CD8-positive, alpha-beta T cell (primary cell): ENCODE measurements at regions of chr15 and their contacts with region 1.

Region 1: DNA sequence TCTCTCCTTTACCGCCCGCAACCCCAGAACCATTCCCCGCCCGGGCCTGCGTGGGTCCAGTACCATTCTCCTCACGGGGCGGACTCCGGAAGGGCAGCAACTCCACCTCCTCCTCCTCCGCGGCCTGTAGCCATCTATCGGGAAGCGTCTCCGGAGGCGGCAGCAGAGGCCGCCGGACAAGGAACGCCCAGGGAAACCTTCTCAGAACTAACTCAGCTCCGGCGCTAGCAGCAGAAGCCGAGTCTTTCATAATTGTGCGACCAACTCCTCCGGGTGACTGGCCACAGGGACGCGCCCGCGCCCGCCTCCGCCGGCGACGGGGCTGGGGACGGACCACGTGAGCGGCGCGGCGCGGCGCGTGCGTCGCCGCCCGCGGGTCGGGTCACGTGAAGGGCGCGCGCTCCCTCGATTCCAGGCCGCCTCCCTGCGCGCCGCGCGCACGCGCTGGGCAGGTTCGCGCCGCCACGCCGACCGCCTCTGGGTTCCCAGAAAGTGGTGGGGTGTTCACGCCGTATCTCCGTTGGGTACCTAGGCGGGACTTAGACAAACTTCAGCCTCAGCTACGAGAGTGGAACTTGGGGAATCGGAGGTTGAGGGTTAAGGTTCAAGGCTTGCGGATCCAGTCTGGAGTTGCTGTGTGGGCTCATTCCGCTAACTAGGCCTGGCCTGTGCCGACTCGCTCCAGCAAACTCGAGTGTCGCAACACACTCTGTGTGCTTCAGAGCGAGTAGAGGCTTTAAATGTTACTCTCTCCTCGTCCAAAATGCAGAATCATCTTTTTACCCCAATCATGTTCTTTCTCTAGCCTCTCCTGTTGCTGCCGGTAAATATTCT is at the start of gene TRPM7:
- DNase-seq: peak; percentile 74 to 96 (median 87)
- ATAC-seq: peak; percentile 74
- H3K4me3 ChIP-seq: peak within 1 kb of the TSS; percentile 78 to 88
- H3K4me3 Mint-ChIP-seq: peak within 1 kb of the TSS; percentile 99
- H3K27ac ChIP-seq: peak within 1 kb of the TSS; percentile 90 to 93
- H3K27ac Mint-ChIP-seq: peak within 1 kb of the TSS; percentile 99
- H3K4me1 ChIP-seq: peaks cover 21% of the 10 kb centered on the region
- H3K4me1 Mint-ChIP-seq: peaks cover 50% of the 10 kb centered on the region
- H3K27me3 ChIP-seq: no peaks in the 10 kb centered on the region
- H3K27me3 Mint-ChIP-seq: no peaks in the 10 kb centered on the region
- CTCF ChIP-seq: no peak
- total RNA-seq, gene TRPM7: 29.5 to 30.3 TPM

Region 2: GRCh38 chr15:48810414-48811317 is 1876.0 kb before region 1 on chr15 and contains the start of gene CEP152:
- CTCF ChIA-PET with region 1: no interaction called
- POLR2A ChIA-PET with region 1: no interaction called
- intact Hi-C with region 1: loop called in 1 of 2 experiments (anchors 10 kb)
- DNase-seq: peak; percentile 96 to 100 (median 98)
- ATAC-seq: peak; percentile 94
- H3K4me3 ChIP-seq: peak within 1 kb of the TSS; percentile 83 to 95
- H3K4me3 Mint-ChIP-seq: peak within 1 kb of the TSS; percentile 90
- H3K27ac ChIP-seq: peak within 1 kb of the TSS; percentile 64 to 73
- H3K27ac Mint-ChIP-seq: peak within 1 kb of the TSS; percentile 71
- H3K4me1 ChIP-seq: peaks cover 13% of the 10 kb centered on the region
- H3K4me1 Mint-ChIP-seq: peaks cover 33% of the 10 kb centered on the region
- H3K27me3 ChIP-seq: no peaks in the 10 kb centered on the region
- H3K27me3 Mint-ChIP-seq: peaks cover 6% of the 10 kb centered on the region
- CTCF ChIP-seq: no peak
- total RNA-seq, gene CEP152: 3.9 to 5.1 TPM

Region 3: GRCh38 chr15:49155110-49155833 is 1531.4 kb before region 1 on chr15 and contains the start of gene COPS2:
- CTCF ChIA-PET with region 1: no interaction called
- POLR2A ChIA-PET with region 1: no interaction called
- intact Hi-C with region 1: loop called in 1 of 2 experiments (anchors 10 kb)
- DNase-seq: peak; percentile 84 to 98 (median 93)
- ATAC-seq: peak; percentile 94
- H3K4me3 ChIP-seq: peak within 1 kb of the TSS; percentile 83 to 90
- H3K4me3 Mint-ChIP-seq: peak within 1 kb of the TSS; percentile 99
- H3K27ac ChIP-seq: peak within 1 kb of the TSS; percentile 83 to 92
- H3K27ac Mint-ChIP-seq: peak within 1 kb of the TSS; percentile 98
- H3K4me1 ChIP-seq: peaks cover 36% of the 10 kb centered on the region
- H3K4me1 Mint-ChIP-seq: peaks cover 55% of the 10 kb centered on the region
- H3K27me3 ChIP-seq: no peaks in the 10 kb centered on the region
- H3K27me3 Mint-ChIP-seq: no peaks in the 10 kb centered on the region
- CTCF ChIP-seq: no peak
- total RNA-seq, gene COPS2: 147 to 159 TPM

Region 4: GRCh38 chr15:49620658-49621368 is 1065.9 kb before region 1 on chr15 and contains the starts of genes DTWD1 and FAM227B:
- CTCF ChIA-PET with region 1: no interaction called
- POLR2A ChIA-PET with region 1: no interaction called
- intact Hi-C with region 1: loop called (anchors 2 to 5 kb)
- DNase-seq: peak; percentile 85 to 98 (median 93)
- ATAC-seq: peak; percentile 97
- H3K4me3 ChIP-seq: peak within 1 kb of the TSS; percentile 71 to 83
- H3K4me3 Mint-ChIP-seq: peak within 1 kb of the TSS; percentile 94
- H3K27ac ChIP-seq: peak within 1 kb of the TSS; percentile 86 to 89
- H3K27ac Mint-ChIP-seq: peak within 1 kb of the TSS; percentile 99
- H3K4me1 ChIP-seq: peaks cover 28% of the 10 kb centered on the region
- H3K4me1 Mint-ChIP-seq: peaks cover 54% of the 10 kb centered on the region
- H3K27me3 ChIP-seq: no peaks in the 10 kb centered on the region
- H3K27me3 Mint-ChIP-seq: no peaks in the 10 kb centered on the region
- CTCF ChIP-seq: no peak
- total RNA-seq, gene DTWD1: 8.7 to 9.7 TPM
- total RNA-seq, gene FAM227B: 3.3 to 4.3 TPM

Region 5: GRCh38 chr15:50424066-50424890 is 262.4 kb before region 1 on chr15 and contains the start of gene USP8:
- CTCF ChIA-PET with region 1: no interaction called
- POLR2A ChIA-PET with region 1: no interaction called
- intact Hi-C with region 1: loop called (anchors 2 to 5 kb)
- DNase-seq: peak; percentile 86 to 97 (median 92)
- ATAC-seq: peak; percentile 96
- H3K4me3 ChIP-seq: peak within 1 kb of the TSS; percentile 84 to 95
- H3K4me3 Mint-ChIP-seq: peak within 1 kb of the TSS; percentile 98
- H3K27ac ChIP-seq: peak within 1 kb of the TSS; percentile 91 to 96
- H3K27ac Mint-ChIP-seq: peak within 1 kb of the TSS; percentile 99
- H3K4me1 ChIP-seq: peaks cover 27% of the 10 kb centered on the region
- H3K4me1 Mint-ChIP-seq: peaks cover 42% of the 10 kb centered on the region
- H3K27me3 ChIP-seq: no peaks in the 10 kb centered on the region
- H3K27me3 Mint-ChIP-seq: no peaks in the 10 kb centered on the region
- CTCF ChIP-seq: no peak
- total RNA-seq, gene USP8: 59.5 to 61.5 TPM

Region 6: GRCh38 chr15:50675536-50676144 is 11.0 kb before region 1 on chr15:
- CTCF ChIA-PET with region 1: interaction called, 3 read pairs
- POLR2A ChIA-PET with region 1: interaction called, 4 read pairs
- intact Hi-C with region 1: loop called (anchors 1 kb)
- DNase-seq: peak in 2 of 9 experiments; percentile 47 to 57
- ATAC-seq: peak; percentile 56
- H3K4me3 ChIP-seq: no peak overlapping the region
- H3K4me3 Mint-ChIP-seq: no peak overlapping the region
- H3K27ac ChIP-seq: no peak overlapping the region
- H3K27ac Mint-ChIP-seq: peak overlapping the region; percentile 37
- H3K4me1 ChIP-seq: peaks cover 7% of the 10 kb centered on the region
- H3K4me1 Mint-ChIP-seq: peaks cover 49% of the 10 kb centered on the region
- H3K27me3 ChIP-seq: no peaks in the 10 kb centered on the region
- H3K27me3 Mint-ChIP-seq: no peaks in the 10 kb centered on the region
- CTCF ChIP-seq: peak; percentile 100

Region 7: GRCh38 chr15:50765195-50765973 is 78.7 kb after region 1 on chr15 and contains the start of gene SPPL2A:
- CTCF ChIA-PET with region 1: no interaction called
- POLR2A ChIA-PET with region 1: no interaction called
- intact Hi-C with region 1: loop called (anchors 1 to 2 kb)
- DNase-seq: peak; percentile 50 to 90 (median 76)
- ATAC-seq: peak; percentile 91
- H3K4me3 ChIP-seq: peak within 1 kb of the TSS; percentile 69 to 77
- H3K4me3 Mint-ChIP-seq: peak within 1 kb of the TSS; percentile 90
- H3K27ac ChIP-seq: peak within 1 kb of the TSS; percentile 63 to 90
- H3K27ac Mint-ChIP-seq: peak within 1 kb of the TSS; percentile 92
- H3K4me1 ChIP-seq: peaks cover 20% of the 10 kb centered on the region
- H3K4me1 Mint-ChIP-seq: peaks cover 45% of the 10 kb centered on the region
- H3K27me3 ChIP-seq: no peaks in the 10 kb centered on the region
- H3K27me3 Mint-ChIP-seq: no peaks in the 10 kb centered on the region
- CTCF ChIP-seq: no peak
- total RNA-seq, gene SPPL2A: 33.4 to 36.8 TPM